A549 (cell line): ENCODE measurements at regions of chr5 and their contacts with region 1.

Region 1: GRCh38 chr5:75053304-75054133 is 1.2 kb upstream of the GCNT4 start:
- DNase-seq: peak; percentile 40 to 78
- ATAC-seq: peak; percentile 71 to 75
- H3K4me3 ChIP-seq: peak overlapping the region; percentile 73
- H3K27ac ChIP-seq: peak overlapping the region; percentile 74 to 92
- H3K4me1 ChIP-seq: peaks cover 16% of the 10 kb centered on the region; the same call in 2 of the 3 replicates
- CTCF ChIP-seq: peak; percentile 35; the same call in 2 of the 3 replicates
- EP300 ChIP-seq: no peak
- POLR2A ChIP-seq: no peak
- RAD21 ChIP-seq: 0 out of 5 replicates have a peak, but pooled peaks of 1 of the 2 experiments have one; percentile 14

Region 2: DNA sequence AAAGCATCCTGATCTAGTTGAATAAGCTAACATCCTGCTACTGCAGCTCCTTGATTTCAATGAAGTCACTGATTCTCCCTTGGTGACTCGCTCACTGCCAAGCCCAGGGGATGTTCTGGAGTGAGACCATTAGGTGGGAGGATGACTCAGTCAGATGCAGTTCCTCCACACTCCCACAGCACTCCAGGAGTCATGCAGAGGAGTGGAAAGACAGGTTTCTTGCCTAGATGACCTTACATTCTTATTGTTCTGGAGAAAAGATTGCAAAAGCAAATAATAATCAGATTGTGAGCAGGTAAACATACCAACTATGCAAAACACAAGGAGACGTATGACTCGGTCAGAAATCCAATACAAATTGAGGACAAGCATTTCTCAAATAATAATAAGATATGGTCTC is 16.4 kb before region 1 on chr5:
- CTCF ChIA-PET with region 1: interaction called, 20 read pairs
- POLR2A ChIA-PET with region 1: no interaction called
- DNase-seq: peak; percentile 48 to 52
- ATAC-seq: peak; percentile 81 to 94
- H3K4me3 ChIP-seq: no peak overlapping the region
- H3K27ac ChIP-seq: no peak overlapping the region
- H3K4me1 ChIP-seq: 0 out of 3 replicates have a peak, but pooled peaks cover 5% of the 10 kb centered on the region
- CTCF ChIP-seq: no peak
- EP300 ChIP-seq: no peak
- POLR2A ChIP-seq: no peak
- RAD21 ChIP-seq: no peak

Region 3: DNA sequence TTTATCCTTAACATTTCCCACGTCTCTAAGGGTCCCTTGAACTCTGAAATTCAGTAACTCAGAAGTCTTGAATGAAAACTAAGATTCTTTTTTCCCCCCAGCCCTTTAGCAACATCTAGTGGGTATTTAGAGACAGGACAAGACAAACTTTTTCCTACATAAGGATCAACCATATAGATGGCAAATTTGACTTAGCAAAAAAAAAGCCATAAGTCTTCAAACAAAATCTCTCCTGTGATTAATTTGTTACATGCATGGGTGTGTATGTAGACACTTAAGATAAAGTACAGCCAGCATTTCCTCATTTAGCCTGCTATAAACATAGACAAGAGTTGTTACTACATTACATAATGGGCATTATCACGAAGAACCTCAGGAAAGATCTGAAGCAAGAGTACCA is 212.2 kb after region 1 on chr5:
- CTCF ChIA-PET with region 1: interaction called, 10 read pairs
- POLR2A ChIA-PET with region 1: no interaction called
- DNase-seq: peak; percentile 21 to 50
- ATAC-seq: peak; percentile 70 to 79; a peak in 5 of 6 replicates
- H3K4me3 ChIP-seq: no peak overlapping the region
- H3K27ac ChIP-seq: no peak overlapping the region
- H3K4me1 ChIP-seq: peaks cover 4% of the 10 kb centered on the region; the same call in 1 of the 3 replicates
- CTCF ChIP-seq: peak; percentile 70
- EP300 ChIP-seq: no peak
- POLR2A ChIP-seq: no peak
- RAD21 ChIP-seq: peak; percentile 78 to 81